ENCODE measurements at regions of chr1 and their contacts with region 1.

Region 1: DNA sequence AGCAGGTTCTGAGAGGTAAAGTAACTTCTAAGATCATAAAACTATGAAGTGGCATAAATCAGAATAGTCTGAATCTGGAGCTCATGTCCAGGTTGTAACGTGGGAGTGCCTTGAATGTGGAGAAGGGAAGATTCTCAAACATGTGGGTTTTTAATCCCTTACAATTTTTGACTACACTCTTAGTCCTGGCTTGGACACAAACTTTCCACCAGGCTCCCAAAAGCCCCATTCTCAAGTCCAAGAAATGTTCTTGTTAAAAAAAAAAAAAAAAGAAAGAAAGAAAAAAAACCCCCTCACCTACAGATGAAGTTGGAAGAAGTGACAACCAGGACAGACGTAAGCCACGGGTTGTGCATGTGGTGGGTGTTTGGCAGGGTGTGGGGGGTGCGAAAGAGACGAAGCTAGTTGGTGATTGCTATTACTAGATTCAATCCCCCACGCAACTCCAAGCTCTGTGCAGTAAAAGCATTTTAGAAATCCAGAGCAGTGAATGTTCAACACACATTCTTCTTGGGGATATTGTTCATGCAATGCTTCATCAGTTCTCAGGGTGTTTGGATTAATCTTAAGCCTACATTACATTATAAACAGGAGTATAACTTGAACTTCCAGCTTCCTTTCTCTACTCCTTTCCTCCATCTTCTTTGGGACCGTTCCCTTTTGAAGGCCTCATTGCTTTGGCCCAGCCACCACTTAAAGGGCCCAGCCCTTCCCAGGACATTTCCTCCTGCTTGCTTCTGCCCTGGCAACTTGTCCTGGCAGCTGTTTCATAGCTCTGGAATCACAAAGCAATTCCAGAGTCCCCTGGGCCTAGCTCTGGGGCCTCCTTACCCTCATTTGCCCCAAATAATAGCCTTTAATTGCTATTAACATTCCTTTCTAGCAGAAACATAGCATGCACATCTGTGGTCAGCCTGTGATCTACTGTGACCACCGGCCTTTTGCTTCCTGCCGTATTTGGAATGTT is 41.8 kb downstream of the PHC2 start:
- DNase-seq: peak; percentile 58
- ATAC-seq: peak; percentile 29 to 68

Region 2: GRCh38 chr1:33429856-33430691 is 41.0 kb after region 1 on chr1:
- intact Hi-C with region 1: loop called in 1 of 2 experiments (anchors 5 kb)
- DNase-seq: peak; percentile 58
- ATAC-seq: peak; percentile 10 to 32